A673 (cell line): ENCODE measurements at regions of chr7 and their contacts with region 1.

Region 1: GRCh38 chr7:69219381-69219780 is 378.9 kb upstream of the AUTS2 start:
- DNase-seq: peak; percentile 21
- H3K4me3 ChIP-seq: no peak overlapping the region
- H3K27ac ChIP-seq: no peak overlapping the region
- H3K4me1 ChIP-seq: no peaks in the 10 kb centered on the region
- H3K27me3 ChIP-seq: no peaks in the 10 kb centered on the region
- CTCF ChIP-seq: no peak

Region 2: GRCh38 chr7:67432536-67433234 is 1786.7 kb before region 1 on chr7:
- CTCF ChIA-PET with region 1: no interaction called
- POLR2A ChIA-PET with region 1: no interaction called
- intact Hi-C with region 1: no loop called
- DNase-seq: no peak
- H3K4me3 ChIP-seq: no peak overlapping the region
- H3K27ac ChIP-seq: no peak overlapping the region
- H3K4me1 ChIP-seq: peaks cover 10% of the 10 kb centered on the region
- H3K27me3 ChIP-seq: no peaks in the 10 kb centered on the region
- CTCF ChIP-seq: no peak

Region 3: GRCh38 chr7:69714886-69715576 is 495.6 kb after region 1 on chr7:
- CTCF ChIA-PET with region 1: no interaction called
- POLR2A ChIA-PET with region 1: interaction called, 12 read pairs
- intact Hi-C with region 1: no loop called
- DNase-seq: no peak
- H3K4me3 ChIP-seq: no peak overlapping the region
- H3K27ac ChIP-seq: no peak overlapping the region
- H3K4me1 ChIP-seq: peaks cover 4% of the 10 kb centered on the region
- H3K27me3 ChIP-seq: no peaks in the 10 kb centered on the region
- CTCF ChIP-seq: no peak